Naive thymus-derived CD8-positive, alpha-beta T cell (primary cell): ENCODE measurements at regions of chr6 and their contacts with region 1.

Region 1: DNA sequence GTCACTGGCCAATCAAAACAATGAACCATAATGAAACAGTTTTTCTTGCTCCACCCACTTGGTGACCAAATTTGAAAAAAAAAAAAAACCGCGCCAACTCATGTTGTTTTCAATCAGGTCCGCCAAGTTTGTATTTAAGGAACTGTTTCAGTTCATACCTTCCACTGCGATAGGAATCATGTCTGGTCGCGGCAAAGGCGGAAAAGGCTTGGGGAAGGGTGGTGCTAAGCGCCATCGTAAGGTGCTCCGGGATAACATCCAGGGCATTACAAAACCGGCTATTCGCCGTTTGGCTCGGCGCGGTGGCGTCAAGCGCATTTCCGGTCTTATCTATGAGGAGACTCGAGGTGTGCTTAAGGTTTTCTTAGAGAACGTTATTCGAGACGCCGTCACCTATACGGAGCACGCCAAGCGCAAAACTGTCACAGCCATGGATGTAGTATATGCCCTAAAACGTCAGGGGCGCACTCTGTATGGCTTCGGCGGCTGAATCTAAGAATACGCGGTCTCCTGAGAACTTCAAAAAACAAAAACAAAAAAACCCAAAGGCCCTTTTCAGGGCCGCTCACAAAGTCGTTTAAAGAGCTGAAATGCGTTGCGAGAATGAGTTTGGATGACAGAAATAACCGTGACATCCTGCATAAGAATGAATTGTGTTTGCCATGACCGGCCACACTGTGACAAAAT is 16.7 kb downstream of the HFE start:
- DNase-seq: peak; percentile 71 to 97 (median 94)
- ATAC-seq: peak; percentile 91 to 92
- H3K4me3 Mint-ChIP-seq: peak overlapping the region; percentile 87 to 93 (median 89)
- H3K27ac Mint-ChIP-seq: peak overlapping the region; percentile 96 to 100 (median 98)
- H3K4me1 Mint-ChIP-seq: peaks cover 10 to 20% (median 14%) of the 10 kb centered on the region in 4 donors
- H3K27me3 Mint-ChIP-seq: peaks cover 0 to 4% (median 0%) of the 10 kb centered on the region in 5 donors

Region 2: DNA sequence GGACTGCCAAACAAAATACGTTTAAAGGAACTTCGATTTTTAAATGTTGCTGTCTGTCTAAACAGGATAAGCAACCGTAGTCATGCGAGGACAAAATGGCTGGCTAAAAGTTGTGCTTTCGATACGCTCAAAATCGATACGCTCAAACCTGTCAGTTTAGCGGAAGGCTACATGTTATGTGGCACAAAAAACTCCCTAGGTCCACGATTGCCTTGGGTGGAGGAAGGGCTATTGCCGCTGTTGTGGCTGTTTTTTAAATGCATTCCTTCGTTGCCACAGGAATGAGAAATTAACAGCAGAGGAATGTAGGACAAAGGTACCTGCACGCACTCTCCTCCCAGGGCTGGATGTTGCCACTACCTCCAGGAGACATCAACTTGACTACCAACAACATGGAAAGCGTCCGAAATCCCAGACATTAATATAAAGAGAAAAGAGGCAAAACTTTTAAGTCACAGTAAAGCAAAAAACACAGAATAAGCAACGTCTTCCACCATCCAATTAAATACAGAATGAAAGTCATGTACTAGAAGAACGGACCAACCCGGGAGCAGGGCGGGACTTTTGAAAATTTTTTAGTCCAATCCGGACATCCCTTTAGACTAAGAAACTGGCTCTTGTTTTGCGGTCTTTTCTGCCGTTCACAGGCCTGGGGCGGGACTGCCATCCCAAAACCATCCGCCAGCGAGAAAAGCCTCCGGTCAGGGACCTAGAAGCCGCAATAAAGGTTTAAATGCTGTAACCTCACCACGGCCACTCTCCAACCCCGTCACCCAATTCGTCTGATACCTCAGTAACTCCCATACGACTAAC is 48.9 kb before region 1 on chr6:
- POLR2A ChIA-PET with region 1: interaction called, 51 read pairs
- DNase-seq: peak; percentile 63 to 95 (median 87)
- ATAC-seq: peak; percentile 65 to 70
- H3K4me3 Mint-ChIP-seq: peak overlapping the region; percentile 93 to 99 (median 96)
- H3K27ac Mint-ChIP-seq: peak overlapping the region; percentile 93 to 99 (median 99)
- H3K4me1 Mint-ChIP-seq: peaks cover 9 to 34% (median 21%) of the 10 kb centered on the region in 4 donors
- H3K27me3 Mint-ChIP-seq: no peaks in the 10 kb centered on the region

Region 3: GRCh38 chr6:26087284-26088115 is 16.4 kb before region 1 on chr6 and contains the start of gene HFE:
- POLR2A ChIA-PET with region 1: interaction called, 29 read pairs
- DNase-seq: peak in 6 of 10 donors; percentile 14 to 43 (median 32)
- ATAC-seq: peak in 1 of 2 donors; percentile 29
- H3K4me3 Mint-ChIP-seq: peak within 1 kb of the TSS; percentile 84 to 93 (median 88)
- H3K27ac Mint-ChIP-seq: peak within 1 kb of the TSS in 9 of 10 donors; percentile 74 to 92 (median 86)
- H3K4me1 Mint-ChIP-seq: peaks cover 12 to 56% (median 29%) of the 10 kb centered on the region in 4 donors
- H3K27me3 Mint-ChIP-seq: no peaks in the 10 kb centered on the region
- polyA plus RNA-seq, gene HFE: 0.68 to 3.8 (median 1.8) TPM

Region 4: GRCh38 chr6:26183581-26184366 is 79.9 kb after region 1 on chr6:
- POLR2A ChIA-PET with region 1: interaction called, 10 read pairs
- DNase-seq: peak; percentile 22 to 82 (median 58)
- ATAC-seq: peak; percentile 92 to 94
- H3K4me3 Mint-ChIP-seq: peak overlapping the region; percentile 93 to 100 (median 98)
- H3K27ac Mint-ChIP-seq: peak overlapping the region; percentile 70 to 98 (median 95)
- H3K4me1 Mint-ChIP-seq: peaks cover 27 to 48% (median 46%) of the 10 kb centered on the region in 4 donors
- H3K27me3 Mint-ChIP-seq: no peaks in the 10 kb centered on the region

Region 5: DNA sequence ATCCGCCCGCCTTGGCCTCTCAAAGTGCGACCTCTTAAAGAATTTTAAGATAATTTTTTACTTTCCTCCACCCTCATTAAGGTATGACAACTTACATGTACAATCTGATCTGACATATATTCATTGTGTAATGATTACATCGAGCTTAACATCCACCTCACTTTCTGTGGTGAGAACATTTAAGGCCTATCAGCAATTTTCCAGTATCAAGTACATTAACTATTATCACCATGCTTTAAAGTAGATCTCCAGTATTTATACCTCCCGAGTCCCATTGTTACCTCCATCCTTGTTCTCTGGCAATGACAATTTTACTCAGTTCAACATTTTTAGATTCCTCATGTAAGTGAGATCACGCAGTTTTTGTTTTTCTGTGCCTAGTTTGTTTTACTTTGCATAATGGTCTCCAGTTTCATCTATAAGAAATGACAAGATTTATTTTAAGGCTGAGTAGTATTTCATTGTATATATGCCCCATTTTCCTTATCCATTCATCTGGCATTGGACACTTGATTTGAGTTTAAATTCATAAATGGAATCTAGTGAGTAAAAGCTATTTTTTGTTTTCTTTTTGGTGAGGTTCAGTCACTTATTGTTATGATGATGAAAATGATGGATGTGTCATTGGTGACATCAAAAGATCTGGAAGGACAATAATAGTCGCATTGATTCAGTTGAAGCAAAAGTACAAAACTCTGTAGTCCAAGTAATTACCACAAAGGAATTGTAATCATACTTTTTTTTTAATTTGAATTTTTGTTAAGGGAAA is 1721.3 kb after region 1 on chr6:
- POLR2A ChIA-PET with region 1: interaction called, 12 read pairs
- DNase-seq: peak in 1 of 10 donors; percentile 40
- ATAC-seq: no peak
- H3K4me3 Mint-ChIP-seq: peak overlapping the region; percentile 83 to 99 (median 92)
- H3K27ac Mint-ChIP-seq: peak overlapping the region; percentile 96 to 100 (median 97)
- H3K4me1 Mint-ChIP-seq: peaks cover 8 to 43% (median 31%) of the 10 kb centered on the region in 4 donors
- H3K27me3 Mint-ChIP-seq: no peaks in the 10 kb centered on the region